ENCODE measurements at regions of chr1 and their contacts with region 1.

Region 1: GRCh38 chr1:212368073-212368484 is 46.6 kb downstream of the PACC1 start:
- DNase-seq: no peak
- ATAC-seq: peak; percentile 83 to 92 (median 84)
- H3K4me3 ChIP-seq: no peak overlapping the region
- H3K27ac ChIP-seq: no peak overlapping the region
- H3K4me1 ChIP-seq: peaks cover 7% of the 10 kb centered on the region
- H3K27me3 ChIP-seq: no peaks in the 10 kb centered on the region
- CTCF ChIP-seq: peak; percentile 74

Region 2: DNA sequence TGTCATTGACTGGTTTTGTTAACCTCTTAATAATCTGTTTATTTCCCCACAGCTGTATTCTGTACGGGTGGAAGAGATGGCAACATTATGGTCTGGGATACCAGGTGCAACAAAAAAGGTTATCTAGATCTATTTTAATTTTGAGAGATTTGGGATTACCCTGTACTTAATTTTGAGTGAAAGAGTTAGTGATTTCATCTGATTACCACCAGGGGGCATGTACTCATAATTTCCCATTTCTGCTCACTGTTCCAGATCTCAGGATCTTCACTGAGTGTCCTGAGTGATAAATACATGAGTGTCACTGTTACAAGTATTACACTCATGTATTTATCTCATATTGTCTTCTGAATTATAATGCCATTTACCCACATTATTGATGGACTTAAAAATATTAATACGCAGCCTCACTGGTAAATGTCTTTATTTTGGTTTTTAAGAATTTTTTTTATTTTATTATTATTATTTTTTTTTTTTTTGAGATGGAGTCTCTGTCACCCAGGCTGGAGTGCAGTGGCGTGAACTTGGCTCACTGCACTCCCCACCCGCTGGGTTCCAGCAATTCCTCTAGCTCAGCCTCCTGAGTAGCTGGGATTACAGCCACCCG is 305.1 kb before region 1 on chr1:
- intact Hi-C with region 1: loop called in 1 of 2 experiments (anchors 2 kb)
- DNase-seq: no peak
- ATAC-seq: peak; percentile 53 to 82 (median 64)
- H3K4me3 ChIP-seq: no peak overlapping the region
- H3K27ac ChIP-seq: no peak overlapping the region
- H3K4me1 ChIP-seq: peaks cover 2% of the 10 kb centered on the region
- H3K27me3 ChIP-seq: no peaks in the 10 kb centered on the region
- CTCF ChIP-seq: peak; percentile 60